Activated CD4-positive, alpha-beta T cell treated with anti-CD3 and anti-CD28 coated beads for 36 hours (primary cell): ENCODE measurements at regions of chr14 and their contacts with region 1.

Region 1: DNA sequence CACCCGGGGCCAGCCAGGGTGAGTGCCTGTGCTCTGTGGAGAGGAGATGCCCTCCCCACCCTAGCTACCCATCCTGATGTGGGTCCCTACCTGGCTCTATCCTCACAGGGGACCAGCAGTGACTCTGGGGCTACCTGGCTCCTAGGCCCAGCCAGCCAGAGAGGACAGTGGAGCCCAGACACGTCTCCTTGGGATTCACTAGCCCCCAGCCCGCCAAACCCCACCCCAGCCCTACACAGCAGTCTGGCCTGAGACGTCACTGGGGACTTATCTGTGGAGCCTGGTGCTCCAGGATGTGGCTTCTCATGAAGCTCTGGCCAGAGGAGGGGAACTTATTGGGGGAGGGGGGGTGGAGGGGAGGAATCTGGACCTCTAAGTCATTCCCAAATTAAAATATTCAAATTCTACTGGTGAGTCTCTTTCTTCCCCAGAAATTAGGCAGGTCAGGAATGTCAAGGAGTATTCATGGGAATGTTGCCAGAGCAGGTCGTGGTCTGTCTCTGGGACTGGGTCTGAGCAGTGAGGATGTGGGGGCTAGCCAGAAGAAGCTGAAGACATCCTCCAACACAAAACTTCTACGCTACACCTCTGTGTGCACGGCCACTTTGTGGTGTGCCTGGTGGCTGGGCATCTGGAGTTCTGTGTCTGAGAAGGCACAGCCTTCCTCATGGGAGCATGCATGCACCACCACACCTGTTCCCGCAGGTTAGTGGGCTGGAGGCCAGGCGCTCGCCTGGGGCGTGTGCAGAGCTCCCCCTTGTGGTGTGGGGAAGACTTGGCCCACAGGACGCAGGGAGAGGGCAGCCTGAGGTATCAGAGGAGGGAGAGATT is 2.7 kb downstream of the CMTM5 start:
- DNase-seq: peak; percentile 78
- ATAC-seq: peak; percentile 92
- H3K4me3 Mint-ChIP-seq: no peak overlapping the region
- H3K27ac Mint-ChIP-seq: no peak overlapping the region
- H3K4me1 Mint-ChIP-seq: no peaks in the 10 kb centered on the region
- H3K27me3 Mint-ChIP-seq: peaks cover 2% of the 10 kb centered on the region

Region 2: GRCh38 chr14:23160924-23161538 is 218.6 kb before region 1 on chr14:
- CTCF ChIA-PET with region 1: no interaction called
- POLR2A ChIA-PET with region 1: no interaction called
- intact Hi-C with region 1: no loop called
- DNase-seq: no peak
- ATAC-seq: no peak
- H3K4me3 Mint-ChIP-seq: no peak overlapping the region
- H3K27ac Mint-ChIP-seq: no peak overlapping the region
- H3K4me1 Mint-ChIP-seq: peaks cover 7% of the 10 kb centered on the region
- H3K27me3 Mint-ChIP-seq: no peaks in the 10 kb centered on the region

Region 3: GRCh38 chr14:23269193-23269592 is 110.4 kb before region 1 on chr14:
- CTCF ChIA-PET with region 1: interaction called, 6 read pairs
- POLR2A ChIA-PET with region 1: no interaction called
- intact Hi-C with region 1: loop called (anchors 1 kb)
- DNase-seq: no peak
- ATAC-seq: no peak
- H3K4me3 Mint-ChIP-seq: no peak overlapping the region
- H3K27ac Mint-ChIP-seq: no peak overlapping the region
- H3K4me1 Mint-ChIP-seq: no peaks in the 10 kb centered on the region
- H3K27me3 Mint-ChIP-seq: peaks cover 5% of the 10 kb centered on the region

Region 4: DNA sequence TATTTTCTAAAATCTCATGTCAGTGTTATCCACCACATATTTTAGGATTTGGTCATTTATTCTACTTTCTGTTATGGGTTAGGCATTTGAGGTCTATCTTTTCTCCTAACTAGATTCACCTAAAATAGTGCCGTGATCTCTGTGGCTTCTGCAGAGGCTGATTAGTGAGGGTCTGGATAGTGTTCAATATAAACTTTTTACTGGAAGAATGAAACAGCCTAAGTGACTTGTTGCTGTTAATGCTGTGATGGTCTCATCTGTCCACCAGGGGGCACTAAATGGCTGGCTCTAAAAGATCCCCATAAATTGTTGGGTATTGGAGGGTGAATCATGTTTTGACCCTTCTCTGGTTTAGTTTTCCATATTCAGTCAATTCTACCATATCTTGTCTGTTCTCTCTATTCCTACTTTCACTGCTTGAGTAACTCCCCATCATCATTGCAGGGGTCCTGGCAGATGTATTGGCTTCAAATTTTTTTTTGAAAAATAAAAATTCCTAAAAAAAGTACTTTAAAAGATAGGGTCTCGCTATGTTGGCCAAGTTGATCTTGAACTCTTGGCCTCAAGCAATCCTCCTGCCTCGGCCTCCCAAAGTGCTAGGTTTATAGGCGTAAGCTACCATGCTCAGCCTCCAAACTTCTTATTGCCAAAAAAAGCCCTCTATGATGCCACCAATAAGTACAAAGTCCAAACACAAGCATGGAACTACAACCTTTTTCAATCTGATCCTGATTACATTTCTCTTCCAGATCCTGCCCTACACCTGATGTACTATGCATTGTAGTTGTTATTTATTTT is 51.4 kb before region 1 on chr14:
- CTCF ChIA-PET with region 1: interaction called, 24 read pairs
- POLR2A ChIA-PET with region 1: no interaction called
- intact Hi-C with region 1: loop called (anchors 1 kb)
- DNase-seq: peak; percentile 82
- ATAC-seq: peak; percentile 92
- H3K4me3 Mint-ChIP-seq: no peak overlapping the region
- H3K27ac Mint-ChIP-seq: no peak overlapping the region
- H3K4me1 Mint-ChIP-seq: peaks cover 6% of the 10 kb centered on the region
- H3K27me3 Mint-ChIP-seq: no peaks in the 10 kb centered on the region